A549 (cell line): ENCODE measurements at regions of chr12 and their contacts with region 1.

Region 1: DNA sequence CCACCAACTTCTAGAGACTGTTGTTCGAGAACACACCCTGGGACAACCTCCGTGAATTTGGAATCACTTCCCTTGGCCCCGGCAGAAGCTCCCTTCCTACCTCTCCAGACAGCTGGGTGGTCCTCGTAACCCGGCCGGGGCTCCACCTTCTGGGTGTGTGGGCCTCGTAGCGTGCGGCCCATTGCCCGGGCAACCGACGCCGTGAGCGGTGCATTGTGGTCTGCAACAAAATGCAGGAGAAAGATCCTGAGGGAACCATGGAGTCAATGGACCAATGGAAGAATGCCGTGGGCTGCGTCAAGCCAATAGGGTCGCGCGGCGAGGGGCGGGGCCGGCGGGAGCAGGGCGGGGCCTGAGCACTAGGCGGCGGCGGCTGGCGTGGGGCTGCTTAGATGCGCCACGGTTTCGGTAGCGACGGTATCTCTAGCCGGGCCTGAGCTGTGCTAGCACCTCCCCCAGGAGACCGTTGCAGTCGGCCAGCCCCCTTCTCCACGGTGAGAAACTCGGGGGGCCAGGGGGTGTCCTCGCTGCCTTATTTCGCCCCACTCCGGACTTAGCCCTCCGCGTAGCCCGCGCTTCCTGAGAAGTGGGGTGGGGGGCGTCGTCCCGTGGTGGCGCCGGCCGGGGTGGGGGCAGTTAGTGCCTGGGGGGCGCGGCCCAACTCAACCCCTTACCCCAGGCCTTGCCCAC is at the start of gene DYNLL1:
- DNase-seq: peak; percentile 98 to 99
- ATAC-seq: peak; percentile 96 to 97
- H3K4me3 ChIP-seq: peak within 1 kb of the TSS; percentile 100
- H3K27ac ChIP-seq: peak within 1 kb of the TSS; percentile 96 to 98
- H3K4me1 ChIP-seq: peaks cover 20% of the 10 kb centered on the region
- CTCF ChIP-seq: no peak
- EP300 ChIP-seq: no peak
- POLR2A ChIP-seq: peak; percentile 99
- RAD21 ChIP-seq: no peak
- polyA plus RNA-seq, gene DYNLL1: 744 and 825 TPM in 2 replicates

Region 2: GRCh38 chr12:120402217-120402616 is 93.7 kb before region 1 on chr12:
- CTCF ChIA-PET with region 1: no interaction called
- POLR2A ChIA-PET with region 1: no interaction called
- DNase-seq: no peak
- ATAC-seq: peak in 1 of 2 experiments; percentile 48; a peak in 3 of 6 replicates
- H3K4me3 ChIP-seq: no peak overlapping the region
- H3K27ac ChIP-seq: no peak overlapping the region
- H3K4me1 ChIP-seq: no peaks in the 10 kb centered on the region
- CTCF ChIP-seq: no peak
- EP300 ChIP-seq: no peak
- POLR2A ChIP-seq: no peak
- RAD21 ChIP-seq: no peak

Region 3: GRCh38 chr12:120413901-120414695 is 81.8 kb before region 1 on chr12:
- CTCF ChIA-PET with region 1: no interaction called
- POLR2A ChIA-PET with region 1: no interaction called
- DNase-seq: no peak
- ATAC-seq: peak; percentile 49 to 56; a peak in 5 of 6 replicates
- H3K4me3 ChIP-seq: no peak overlapping the region
- H3K27ac ChIP-seq: no peak overlapping the region
- H3K4me1 ChIP-seq: no peaks in the 10 kb centered on the region
- CTCF ChIP-seq: no peak
- EP300 ChIP-seq: no peak
- POLR2A ChIP-seq: no peak
- RAD21 ChIP-seq: no peak

Region 4: DNA sequence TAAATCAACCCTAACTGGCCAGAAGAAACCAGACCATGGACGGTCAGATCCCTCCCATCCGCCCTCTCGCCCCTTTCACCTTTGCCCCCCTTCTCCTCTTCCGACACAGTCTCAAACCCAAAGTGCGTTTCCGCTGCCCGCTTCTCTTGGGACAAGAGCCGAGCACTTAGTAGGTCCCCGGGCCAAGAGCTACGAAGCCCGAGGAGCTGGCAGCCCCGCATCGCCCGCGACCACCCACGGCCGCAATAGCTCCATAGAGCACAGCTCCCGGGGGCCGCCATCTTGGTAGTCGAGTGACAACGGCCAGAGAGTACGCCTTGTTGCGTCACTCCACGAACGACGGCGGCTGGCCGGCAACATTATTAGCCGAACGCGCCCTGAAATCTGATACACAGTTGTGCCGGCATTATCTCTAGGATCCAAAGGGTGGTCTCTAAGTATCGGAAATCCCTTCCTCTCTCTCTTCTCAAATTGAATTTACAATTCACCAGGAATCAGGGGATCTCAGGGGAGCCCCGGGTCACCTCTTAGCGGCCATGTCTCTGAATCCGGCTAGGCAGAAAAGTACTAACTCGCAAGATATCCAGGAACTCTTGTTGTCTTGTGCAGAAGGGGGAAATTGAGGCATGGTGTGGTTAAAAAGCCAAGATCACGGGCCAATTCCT is 33.1 kb after region 1 on chr12 and contains the start of gene COQ5:
- CTCF ChIA-PET with region 1: interaction called, 4 read pairs
- POLR2A ChIA-PET with region 1: interaction called, 16 read pairs
- DNase-seq: peak; percentile 74 to 88
- ATAC-seq: peak; percentile 94 to 97
- H3K4me3 ChIP-seq: peak within 1 kb of the TSS; percentile 67
- H3K27ac ChIP-seq: peak within 1 kb of the TSS; percentile 95 to 96
- H3K4me1 ChIP-seq: peaks cover 15% of the 10 kb centered on the region; the same call in 2 of the 3 replicates
- CTCF ChIP-seq: no peak
- EP300 ChIP-seq: no peak
- POLR2A ChIP-seq: peak; percentile 86
- RAD21 ChIP-seq: no peak
- polyA plus RNA-seq, gene COQ5: 84.9 and 100.0 TPM in 2 replicates